Transverse colon (tissue), 4 donors: ENCODE measurements at regions of chr15 and their contacts with region 1.

Region 1: GRCh38 chr15:66955871-66956585 is 109.4 kb upstream of the SMAD3 start:
- DNase-seq: no peak
- H3K4me3 ChIP-seq: no peak overlapping the region
- H3K27ac ChIP-seq: no peak overlapping the region
- H3K4me1 ChIP-seq: no peaks in the 10 kb centered on the region
- H3K27me3 ChIP-seq: no peaks in the 10 kb centered on the region
- CTCF ChIP-seq: no peak
- EP300 ChIP-seq: no peak
- POLR2A ChIP-seq: no peak

Region 2: GRCh38 chr15:67296188-67296587 is 340.2 kb after region 1 on chr15:
- in situ Hi-C with region 1: loop called in 1 of 4 experiments (anchors 10 kb)
- intact Hi-C with region 1: no loop called
- DNase-seq: no peak
- H3K4me3 ChIP-seq: no peak overlapping the region
- H3K27ac ChIP-seq: no peak overlapping the region
- H3K4me1 ChIP-seq: no peaks in the 10 kb centered on the region
- H3K27me3 ChIP-seq: no peaks in the 10 kb centered on the region
- CTCF ChIP-seq: no peak
- EP300 ChIP-seq: no peak
- POLR2A ChIP-seq: no peak